ENCODE measurements at regions of chr2 and their contacts with region 1.

Region 1: DNA sequence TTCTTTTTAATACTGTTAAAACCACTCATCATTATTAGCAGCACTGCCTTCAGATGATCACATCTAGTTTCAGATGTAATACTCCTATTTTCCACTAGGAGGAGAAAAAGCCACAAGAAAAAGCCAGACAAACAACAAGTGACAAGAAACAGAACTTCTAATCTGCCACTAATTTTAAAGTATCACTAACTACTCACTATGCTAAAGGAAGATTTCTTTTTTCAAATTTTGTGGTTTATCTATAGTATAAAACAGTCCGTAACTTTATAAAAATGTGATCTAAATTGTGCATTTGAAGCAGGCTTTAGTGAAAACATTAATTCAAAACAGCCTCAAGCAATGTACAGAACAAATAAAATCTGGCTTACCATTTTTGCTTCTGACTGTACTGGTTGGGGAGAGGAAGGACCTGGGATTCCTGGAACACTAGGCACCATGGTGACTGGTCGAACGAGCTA is 56.8 kb downstream of the ATF2 start:
- DNase-seq: no peak
- ATAC-seq: no peak

Region 2: GRCh38 chr2:175181104-175181876 is 70.1 kb after region 1 on chr2 and contains the start of gene ATP5MC3:
- intact Hi-C with region 1: loop called (anchors 5 kb)
- DNase-seq: peak; percentile 99
- ATAC-seq: peak; percentile 98
- total RNA-seq, gene ATP5MC3: 1,232 TPM

Measured in Right ventricle myocardium inferior (tissue), 1 donor.